ENCODE measurements at regions of chr2 and their contacts with region 1.

Region 1: GRCh38 chr2:65527451-65528240 is 95.2 kb upstream of the SPRED2 start:
- DNase-seq: peak; percentile 86 to 91
- H3K4me3 ChIP-seq: no peak overlapping the region
- H3K4me3 Mint-ChIP-seq: no peak overlapping the region
- H3K27ac Mint-ChIP-seq: no peak overlapping the region
- H3K4me1 ChIP-seq: peaks cover 21% of the 10 kb centered on the region
- H3K4me1 Mint-ChIP-seq: peaks cover 28% of the 10 kb centered on the region
- H3K27me3 ChIP-seq: no peaks in the 10 kb centered on the region
- H3K27me3 Mint-ChIP-seq: no peaks in the 10 kb centered on the region
- CTCF ChIP-seq: peak in 1 of 2 experiments; percentile 31

Region 2: GRCh38 chr2:65453916-65454315 is 73.7 kb before region 1 on chr2:
- CTCF ChIA-PET with region 1: no interaction called
- POLR2A ChIA-PET with region 1: no interaction called
- intact Hi-C with region 1: loop called (anchors 2 kb)
- DNase-seq: peak; percentile 57 to 62
- H3K4me3 ChIP-seq: no peak overlapping the region
- H3K4me3 Mint-ChIP-seq: no peak overlapping the region
- H3K27ac Mint-ChIP-seq: no peak overlapping the region
- H3K4me1 ChIP-seq: peaks cover 42% of the 10 kb centered on the region
- H3K4me1 Mint-ChIP-seq: peaks cover 21% of the 10 kb centered on the region
- H3K27me3 ChIP-seq: no peaks in the 10 kb centered on the region
- H3K27me3 Mint-ChIP-seq: no peaks in the 10 kb centered on the region
- CTCF ChIP-seq: no peak

Region 3: GRCh38 chr2:65554765-65555591 is 27.3 kb after region 1 on chr2:
- CTCF ChIA-PET with region 1: interaction called, 8 read pairs
- POLR2A ChIA-PET with region 1: no interaction called
- intact Hi-C with region 1: loop called (anchors 1 kb)
- DNase-seq: no peak
- H3K4me3 ChIP-seq: no peak overlapping the region
- H3K4me3 Mint-ChIP-seq: no peak overlapping the region
- H3K27ac Mint-ChIP-seq: no peak overlapping the region
- H3K4me1 ChIP-seq: peaks cover 5% of the 10 kb centered on the region; the same call in 1 of the 2 replicates
- H3K4me1 Mint-ChIP-seq: no peaks in the 10 kb centered on the region
- H3K27me3 ChIP-seq: no peaks in the 10 kb centered on the region
- H3K27me3 Mint-ChIP-seq: peaks cover 8% of the 10 kb centered on the region
- CTCF ChIP-seq: no peak